Uterus (tissue), 4 donors: ENCODE measurements at regions of chr2 and their contacts with region 1.

Region 1: DNA sequence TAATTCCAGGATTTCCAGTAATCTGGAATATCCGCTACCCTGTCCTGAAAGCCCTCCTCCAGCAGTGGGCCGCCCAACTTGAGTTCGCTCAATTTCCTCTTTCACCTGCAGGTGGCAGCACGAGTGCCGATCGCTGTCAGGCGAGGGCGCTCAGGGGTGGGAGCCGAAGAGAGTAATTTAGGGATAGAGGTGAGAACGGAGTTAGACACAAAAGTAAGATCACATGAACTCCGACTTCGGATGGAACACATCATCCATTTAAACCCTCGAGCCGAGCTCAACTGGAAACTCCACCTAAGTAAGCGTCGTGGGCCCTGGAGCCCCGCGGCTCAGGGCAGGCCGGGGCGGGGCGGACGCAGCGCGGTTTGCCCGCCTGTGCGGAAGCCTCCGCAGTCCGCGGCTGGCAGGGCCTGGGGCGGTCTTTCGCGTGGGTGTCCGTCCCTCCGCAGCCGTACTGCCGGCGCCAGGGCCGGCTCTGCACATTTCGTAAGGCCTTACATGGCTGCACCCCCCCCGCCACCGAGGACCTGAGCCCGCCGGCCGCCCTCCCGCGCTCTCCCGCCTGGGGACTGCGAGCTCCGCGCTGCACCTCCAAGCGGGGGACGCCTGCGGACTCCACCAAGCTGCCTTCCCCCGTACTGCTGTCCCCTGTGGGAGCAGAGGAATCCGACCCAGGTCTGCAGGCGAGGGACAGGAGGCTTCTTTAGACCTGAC is 61.2 kb downstream of the SEMA4F start:
- DNase-seq: peak; percentile 71 to 82
- H3K4me3 ChIP-seq: peak overlapping the region; percentile 7 to 55
- H3K27ac ChIP-seq: peak overlapping the region; percentile 43 to 52
- H3K4me1 ChIP-seq: peaks cover 0 to 4% of the 10 kb centered on the region in 2 donors
- H3K27me3 ChIP-seq: no peaks in the 10 kb centered on the region
- CTCF ChIP-seq: peak; percentile 74 to 86 (median 82)
- POLR2A ChIP-seq: no peak

Region 2: GRCh38 chr2:74876081-74876886 is 161.0 kb after region 1 on chr2:
- intact Hi-C with region 1: loop called (anchors 5 kb)
- DNase-seq: peak; percentile 26 to 30
- H3K4me3 ChIP-seq: no peak overlapping the region
- H3K27ac ChIP-seq: peak overlapping the region; percentile 16 to 51
- H3K4me1 ChIP-seq: no peaks in the 10 kb centered on the region
- H3K27me3 ChIP-seq: no peaks in the 10 kb centered on the region
- CTCF ChIP-seq: peak; percentile 49 to 73 (median 60)
- POLR2A ChIP-seq: no peak